ENCODE measurements at regions of chr5 and their contacts with region 1.

Region 1: GRCh38 chr5:154072414-154073171 is 33.8 kb downstream of the MFAP3 start:
- H3K4me3 ChIP-seq: no peak overlapping the region
- H3K27ac ChIP-seq: no peak overlapping the region
- H3K4me1 ChIP-seq: no peaks in the 10 kb centered on the region
- CTCF ChIP-seq: peak; percentile 92

Region 2: GRCh38 chr5:154058055-154059038 is 14.2 kb before region 1 on chr5:
- CTCF ChIA-PET with region 1: interaction called, 12 read pairs
- POLR2A ChIA-PET with region 1: no interaction called
- H3K4me3 ChIP-seq: no peak overlapping the region
- H3K27ac ChIP-seq: no peak overlapping the region
- H3K4me1 ChIP-seq: peaks cover 19% of the 10 kb centered on the region
- CTCF ChIP-seq: no peak

Region 3: DNA sequence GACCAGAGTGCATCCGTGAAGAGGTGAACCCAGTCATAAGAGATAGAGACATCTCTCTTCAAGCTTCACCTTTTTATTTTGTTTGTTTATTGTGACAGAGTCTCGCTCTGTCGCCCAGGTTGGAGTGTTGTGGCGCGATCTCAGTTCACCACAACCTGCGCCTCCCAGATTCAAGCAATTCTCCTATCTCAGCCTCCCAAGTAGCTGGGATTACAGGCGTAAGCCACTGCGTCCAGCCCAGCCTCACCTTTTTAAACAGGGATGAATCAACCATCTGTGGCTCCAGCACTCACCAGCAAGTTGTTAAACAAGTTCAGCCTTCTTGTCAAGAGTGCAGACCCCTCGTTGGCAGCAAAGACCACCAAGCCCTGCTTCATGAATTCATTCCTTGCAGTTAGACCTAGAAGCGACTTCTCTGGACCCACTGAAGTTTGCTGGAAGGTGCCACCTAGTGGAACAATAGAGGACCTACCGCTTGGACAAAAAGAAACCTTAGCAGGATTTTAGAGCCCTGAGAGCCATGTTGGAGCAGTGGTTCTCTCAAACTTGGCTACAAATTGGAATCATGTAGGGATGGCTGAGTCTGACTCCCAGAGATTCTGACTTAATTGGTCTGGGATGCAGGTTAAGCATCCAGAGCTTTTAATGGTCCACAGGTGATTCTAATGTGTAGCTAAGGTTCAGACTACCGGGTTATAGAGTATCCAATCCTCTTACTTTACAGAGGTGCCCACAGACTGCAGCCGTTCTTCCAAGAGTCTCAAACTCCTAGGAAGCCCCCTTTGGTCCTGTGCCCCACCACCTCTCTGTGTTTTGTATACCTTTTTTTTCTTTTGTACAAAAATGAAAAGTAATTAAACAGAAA is 107.5 kb after region 1 on chr5:
- CTCF ChIA-PET with region 1: interaction called, 143 read pairs
- POLR2A ChIA-PET with region 1: no interaction called
- H3K4me3 ChIP-seq: no peak overlapping the region
- H3K27ac ChIP-seq: no peak overlapping the region
- H3K4me1 ChIP-seq: peaks cover 3% of the 10 kb centered on the region
- CTCF ChIP-seq: peak; percentile 57

Region 4: DNA sequence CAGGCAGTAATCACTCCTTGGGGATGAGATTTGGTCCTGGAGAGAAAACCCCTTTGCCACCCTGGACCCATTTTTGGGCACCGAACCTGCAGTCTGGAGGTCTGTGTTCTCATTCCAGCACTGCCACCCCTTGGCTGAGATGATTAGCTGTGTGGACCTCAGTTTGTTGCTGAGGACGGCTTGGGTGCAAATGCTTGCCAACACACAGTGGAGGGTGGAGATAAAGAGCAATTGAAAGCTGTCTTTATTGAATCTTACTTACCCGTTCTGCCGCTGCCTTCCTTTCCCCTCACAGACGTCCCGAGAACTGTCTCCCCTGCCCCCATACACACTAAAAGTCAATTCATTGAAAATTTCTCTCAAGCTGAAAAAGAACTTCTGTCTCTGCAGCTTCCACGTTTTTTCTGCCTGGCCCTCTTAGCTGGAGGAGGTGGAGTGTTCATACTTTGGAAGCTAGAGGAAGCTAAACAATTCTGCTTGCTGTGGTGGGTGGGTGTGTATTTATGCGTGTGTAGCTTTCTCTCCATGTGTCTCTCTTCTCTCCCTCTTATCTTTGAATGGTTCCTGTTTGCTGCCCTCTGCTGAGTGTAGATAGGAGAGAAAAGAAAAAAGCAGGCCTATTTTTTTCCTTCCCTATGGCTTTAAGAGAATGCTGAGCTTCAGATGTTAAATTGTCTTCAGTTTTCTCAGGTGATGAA is 124.5 kb after region 1 on chr5:
- CTCF ChIA-PET with region 1: interaction called, 22 read pairs
- POLR2A ChIA-PET with region 1: no interaction called
- H3K4me3 ChIP-seq: no peak overlapping the region
- H3K27ac ChIP-seq: no peak overlapping the region
- H3K4me1 ChIP-seq: peaks cover 7% of the 10 kb centered on the region; the same call in 1 of the 2 replicates
- CTCF ChIP-seq: peak; percentile 63

Region 5: GRCh38 chr5:154467655-154468354 is 395.2 kb after region 1 on chr5:
- CTCF ChIA-PET with region 1: interaction called, 20 read pairs
- POLR2A ChIA-PET with region 1: no interaction called
- H3K4me3 ChIP-seq: no peak overlapping the region
- H3K27ac ChIP-seq: no peak overlapping the region
- H3K4me1 ChIP-seq: peaks cover 12% of the 10 kb centered on the region
- CTCF ChIP-seq: peak; percentile 82